Prostate gland (tissue), 2 donors: ENCODE measurements at regions of chr15 and their contacts with region 1.

Region 1: GRCh38 chr15:89728254-89728653 is 22.8 kb downstream of the MESP1 start:
- DNase-seq: no peak
- H3K4me3 ChIP-seq: no peak overlapping the region
- H3K27ac ChIP-seq: no peak overlapping the region
- H3K4me1 ChIP-seq: no peaks in the 10 kb centered on the region
- H3K27me3 ChIP-seq: no peaks in the 10 kb centered on the region
- CTCF ChIP-seq: no peak
- POLR2A ChIP-seq: no peak

Region 2: DNA sequence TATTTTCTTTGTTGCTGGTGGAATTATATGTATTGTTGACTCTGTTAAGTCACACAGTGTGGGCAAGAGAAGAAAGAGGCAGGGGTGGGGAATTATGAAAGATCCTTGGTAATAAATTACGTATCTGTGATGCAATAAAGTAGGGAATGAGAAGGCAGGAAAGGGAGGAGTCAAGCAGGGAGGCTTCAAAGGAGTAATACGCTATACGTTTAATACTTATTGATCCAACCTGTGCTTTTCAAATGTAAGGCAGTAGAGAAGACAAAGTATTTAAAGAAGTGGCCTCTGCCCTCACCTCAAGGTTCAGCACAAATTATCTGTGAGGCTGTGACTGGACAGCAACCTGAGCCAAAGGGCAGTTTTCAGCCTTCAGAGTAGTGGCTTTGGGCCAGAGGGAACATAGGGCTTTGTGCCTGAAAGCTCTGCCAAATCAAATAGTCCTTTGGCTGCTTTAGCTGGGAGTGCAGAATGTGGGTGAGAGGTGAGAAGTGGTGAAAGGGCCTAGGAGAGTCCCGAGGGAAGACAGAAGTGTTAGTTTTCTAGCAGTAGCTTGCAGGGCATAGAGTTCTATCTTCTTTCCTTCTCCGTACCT is 47.9 kb before region 1 on chr15:
- intact Hi-C with region 1: loop called (anchors 5 kb)
- DNase-seq: peak; percentile 87
- H3K4me3 ChIP-seq: no peak overlapping the region
- H3K27ac ChIP-seq: peak overlapping the region; percentile 22 to 39
- H3K4me1 ChIP-seq: peaks cover 8% of the 10 kb centered on the region
- H3K27me3 ChIP-seq: no peaks in the 10 kb centered on the region
- CTCF ChIP-seq: no peak
- POLR2A ChIP-seq: no peak